ENCODE measurements at regions of chr3 and their contacts with region 1.

Region 1: DNA sequence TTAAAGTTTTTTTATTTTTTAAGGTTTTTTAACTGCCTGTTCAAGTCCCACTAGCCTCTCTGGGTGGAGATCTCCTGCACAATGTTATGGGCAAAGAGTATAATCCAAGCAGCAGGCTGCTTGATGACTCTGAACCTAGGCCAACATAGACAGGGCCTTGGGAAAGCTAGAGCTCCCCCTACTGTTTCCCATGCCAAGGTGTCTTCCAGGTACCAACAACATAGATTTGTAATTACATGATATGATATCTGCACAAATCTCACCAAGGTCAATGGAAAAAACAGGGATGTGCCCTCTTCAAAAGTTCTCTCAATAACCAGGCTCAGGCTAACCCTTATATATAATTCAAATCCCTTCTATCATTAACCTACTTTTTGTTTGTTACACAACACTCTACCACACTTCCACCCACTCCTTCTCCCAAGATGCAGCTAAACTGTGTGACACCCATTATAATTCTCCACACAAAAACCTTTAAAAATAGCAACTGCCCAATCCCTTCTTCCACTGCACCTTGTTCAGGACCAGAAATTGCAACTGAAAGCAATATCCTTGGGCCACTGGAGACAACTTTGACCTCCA is 43.8 kb downstream of the RBM15B start:
- DNase-seq: peak; percentile 38
- ATAC-seq: peak; percentile 97
- H3K4me3 ChIP-seq: no peak overlapping the region
- H3K27ac ChIP-seq: no peak overlapping the region
- H3K4me1 ChIP-seq: no peaks in the 10 kb centered on the region
- H3K27me3 ChIP-seq: no peaks in the 10 kb centered on the region
- CTCF ChIP-seq: peak; percentile 45 to 93 (median 77)
- POLR2A ChIP-seq: no peak
- RAD21 ChIP-seq: peak; percentile 51

Region 2: DNA sequence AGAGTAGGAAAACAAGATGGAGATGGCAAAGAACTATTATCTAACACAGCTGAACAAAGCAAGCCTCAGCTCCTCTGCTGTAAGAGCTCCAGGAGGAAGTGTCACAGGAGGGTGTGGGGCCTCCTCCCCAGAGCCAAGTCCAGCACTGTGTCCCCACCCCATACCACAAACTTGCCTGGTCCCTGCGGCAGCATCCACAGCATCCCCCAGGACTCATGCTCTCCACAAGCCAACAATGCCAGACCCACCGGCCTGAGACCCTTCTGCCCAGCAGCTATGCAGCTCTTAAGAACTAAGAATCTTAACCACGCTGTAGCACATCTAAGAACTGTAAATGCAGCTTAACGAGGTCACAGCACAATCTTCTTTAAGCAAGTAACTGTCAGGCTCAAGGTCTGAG is 34.7 kb before region 1 on chr3:
- CTCF ChIA-PET with region 1: no interaction called
- POLR2A ChIA-PET with region 1: no interaction called
- RAD21 ChIA-PET with region 1: no interaction called
- intact Hi-C with region 1: no loop called
- DNase-seq: no peak
- ATAC-seq: no peak
- H3K4me3 ChIP-seq: no peak overlapping the region
- H3K27ac ChIP-seq: no peak overlapping the region
- H3K4me1 ChIP-seq: no peaks in the 10 kb centered on the region
- H3K27me3 ChIP-seq: no peaks in the 10 kb centered on the region
- CTCF ChIP-seq: no peak
- POLR2A ChIP-seq: no peak
- RAD21 ChIP-seq: no peak

Region 3: GRCh38 chr3:51445544-51446280 is 10.9 kb after region 1 on chr3:
- CTCF ChIA-PET with region 1: interaction called, 17 read pairs
- POLR2A ChIA-PET with region 1: no interaction called
- RAD21 ChIA-PET with region 1: no interaction called
- intact Hi-C with region 1: no loop called
- DNase-seq: no peak
- ATAC-seq: no peak
- H3K4me3 ChIP-seq: no peak overlapping the region
- H3K27ac ChIP-seq: no peak overlapping the region
- H3K4me1 ChIP-seq: peaks cover 0 to 9% of the 10 kb centered on the region in 2 experiments; a peak in 1 of 4 replicates
- H3K27me3 ChIP-seq: no peaks in the 10 kb centered on the region
- CTCF ChIP-seq: no peak
- POLR2A ChIP-seq: no peak
- RAD21 ChIP-seq: no peak